Activated CD4-positive, alpha-beta T cell treated with anti-CD3 and anti-CD28 coated beads, Interleukin-2, amount 10 ng/mL, durations not matched to agents 24 days and 14 days (primary cell): ENCODE measurements at regions of chr11 and their contacts with region 1.

Region 1: GRCh38 chr11:72762641-72763304 is 10.6 kb upstream of the ARAP1 start:
- DNase-seq: peak; percentile 68
- H3K4me3 Mint-ChIP-seq: no peak overlapping the region
- H3K27ac Mint-ChIP-seq: no peak overlapping the region
- H3K4me1 Mint-ChIP-seq: peaks cover 22% of the 10 kb centered on the region
- H3K27me3 Mint-ChIP-seq: no peaks in the 10 kb centered on the region

Region 2: DNA sequence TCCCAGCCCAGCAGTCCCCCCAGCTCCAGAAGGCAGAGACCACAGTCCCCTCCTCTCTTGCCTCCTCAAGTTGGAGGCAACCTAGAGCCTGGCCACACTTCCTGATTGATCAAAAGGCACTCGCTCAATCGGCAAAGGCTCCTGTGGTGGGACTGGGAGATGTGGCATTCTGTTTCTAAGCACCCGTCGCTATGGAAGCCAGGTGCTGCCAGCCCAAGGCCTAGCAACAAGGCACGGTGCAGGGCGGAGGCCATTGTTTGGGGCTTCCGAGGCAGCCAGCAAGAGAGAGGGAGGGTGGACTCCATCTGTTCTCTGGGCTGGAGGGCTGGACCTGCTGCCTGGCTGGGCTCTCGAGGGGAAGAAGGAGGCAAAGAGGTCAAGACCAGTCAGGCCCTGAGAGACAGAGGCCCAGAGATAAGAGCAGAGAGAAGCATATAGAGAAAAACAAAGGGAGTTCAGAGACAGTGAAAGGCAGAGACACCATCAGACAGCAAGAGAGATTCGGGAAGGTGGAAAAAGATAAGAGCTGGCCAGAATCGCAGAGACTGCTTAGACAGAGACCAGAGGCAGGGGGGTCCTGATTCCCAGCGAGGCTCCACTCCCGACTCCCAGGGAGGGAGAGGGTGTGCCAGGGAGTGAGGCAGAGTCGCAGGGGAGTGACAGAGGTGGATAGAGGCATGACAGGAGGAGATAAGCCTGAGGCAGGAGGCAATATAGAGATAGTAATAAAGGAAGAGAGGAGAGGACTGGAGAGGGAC is 109.7 kb before region 1 on chr11:
- intact Hi-C with region 1: no loop called
- DNase-seq: no peak
- H3K4me3 Mint-ChIP-seq: no peak overlapping the region
- H3K27ac Mint-ChIP-seq: peak overlapping the region; percentile 50
- H3K4me1 Mint-ChIP-seq: no peaks in the 10 kb centered on the region
- H3K27me3 Mint-ChIP-seq: peaks cover 5% of the 10 kb centered on the region

Region 3: DNA sequence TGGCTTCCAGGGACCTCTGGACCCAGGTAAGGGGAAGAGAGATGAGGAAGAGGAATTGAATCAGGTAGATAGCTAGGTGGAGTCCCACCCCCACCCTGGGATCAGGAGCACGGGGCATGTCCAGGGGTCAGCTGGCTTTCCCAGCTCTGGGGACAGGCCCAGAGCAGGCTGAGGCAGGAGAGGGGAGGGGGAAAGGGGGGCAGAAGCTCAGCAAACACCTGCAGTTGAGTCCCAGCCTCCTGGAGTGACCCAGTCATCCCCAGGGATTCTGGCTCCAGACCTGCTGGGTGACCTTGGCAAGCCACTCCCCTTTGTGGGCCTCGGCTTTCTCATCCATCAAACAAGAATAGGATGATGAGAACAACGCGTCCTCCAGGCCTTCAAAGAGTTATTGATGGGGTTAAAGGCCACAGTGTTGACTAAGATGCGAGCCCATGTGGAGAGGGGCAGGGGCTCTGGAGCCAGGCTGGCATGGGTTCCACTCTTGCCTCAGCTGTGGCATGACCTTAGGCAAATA is 15.0 kb after region 1 on chr11:
- intact Hi-C with region 1: loop called (anchors 2 kb)
- DNase-seq: no peak
- H3K4me3 Mint-ChIP-seq: no peak overlapping the region
- H3K27ac Mint-ChIP-seq: no peak overlapping the region
- H3K4me1 Mint-ChIP-seq: peaks cover 26% of the 10 kb centered on the region
- H3K27me3 Mint-ChIP-seq: peaks cover 5% of the 10 kb centered on the region